PC-9 (cell line): ENCODE measurements at regions of chr3 and their contacts with region 1.

Region 1: GRCh38 chr3:110110630-110111029 is 773.3 kb upstream of the DPPA4 start:
- DNase-seq: no peak
- H3K4me3 ChIP-seq: no peak overlapping the region
- H3K27ac ChIP-seq: no peak overlapping the region
- H3K4me1 ChIP-seq: no peaks in the 10 kb centered on the region
- H3K27me3 ChIP-seq: no peaks in the 10 kb centered on the region
- CTCF ChIP-seq: no peak

Region 2: DNA sequence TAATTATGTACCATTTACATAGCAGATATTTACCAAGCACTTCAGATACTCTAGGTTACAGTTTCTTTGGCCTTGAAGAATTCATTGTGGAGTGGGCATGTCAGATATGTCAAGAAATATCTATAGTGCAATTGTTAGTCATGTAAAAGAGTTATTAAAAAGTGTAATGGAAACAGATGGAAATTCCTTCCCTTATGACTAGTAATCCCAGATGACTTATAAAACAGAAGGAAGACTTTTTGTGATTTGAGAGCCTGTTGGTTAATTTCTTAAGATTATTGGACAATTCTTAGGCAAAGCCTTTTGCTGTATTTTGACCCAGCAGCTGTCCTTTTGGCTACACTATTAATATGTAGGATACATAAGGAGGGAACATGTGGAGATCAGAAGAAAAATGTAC is 252.1 kb after region 1 on chr3:
- CTCF ChIA-PET with region 1: no interaction called
- POLR2A ChIA-PET with region 1: no interaction called
- intact Hi-C with region 1: no loop called
- DNase-seq: no peak
- H3K4me3 ChIP-seq: no peak overlapping the region
- H3K27ac ChIP-seq: no peak overlapping the region
- H3K4me1 ChIP-seq: no peaks in the 10 kb centered on the region
- H3K27me3 ChIP-seq: no peaks in the 10 kb centered on the region
- CTCF ChIP-seq: no peak

Region 3: DNA sequence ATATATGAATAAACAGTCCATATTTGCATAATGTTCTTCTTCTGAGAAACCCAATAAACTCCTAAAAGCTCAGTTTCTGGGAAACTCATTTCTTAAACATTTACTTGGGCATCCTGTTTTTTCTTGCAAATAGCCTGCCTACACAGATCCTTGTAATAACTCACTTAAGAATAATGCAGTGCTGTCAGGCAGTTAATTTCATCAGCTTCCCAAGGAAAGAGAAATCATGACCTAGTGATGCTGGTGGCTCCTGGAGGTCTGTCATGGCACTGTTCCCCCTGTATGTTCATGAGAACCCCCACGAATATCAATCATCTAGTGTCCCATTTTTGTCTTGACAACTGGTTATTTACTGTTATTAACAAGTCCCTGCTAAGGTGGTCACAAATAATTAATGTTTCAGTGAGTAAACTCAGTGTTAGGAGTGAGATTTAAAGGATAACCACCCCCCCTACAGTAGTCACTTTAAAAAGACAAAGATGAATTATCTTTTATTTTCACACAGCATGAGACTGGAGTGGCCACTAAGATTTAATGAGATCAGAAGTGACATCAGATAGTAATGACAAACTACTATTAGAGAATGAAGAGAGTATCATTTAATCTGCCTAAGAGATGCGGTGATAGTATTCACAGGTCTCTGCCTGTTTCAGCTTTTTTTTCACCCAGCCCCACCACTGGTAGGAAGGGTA is 681.5 kb after region 1 on chr3:
- CTCF ChIA-PET with region 1: no interaction called
- POLR2A ChIA-PET with region 1: interaction called, 10 read pairs
- intact Hi-C with region 1: no loop called
- DNase-seq: no peak
- H3K4me3 ChIP-seq: no peak overlapping the region
- H3K27ac ChIP-seq: no peak overlapping the region
- H3K4me1 ChIP-seq: no peaks in the 10 kb centered on the region
- H3K27me3 ChIP-seq: no peaks in the 10 kb centered on the region
- CTCF ChIP-seq: no peak